GM12878 (cell line): ENCODE measurements at regions of chr10 and their contacts with region 1.

Region 1: DNA sequence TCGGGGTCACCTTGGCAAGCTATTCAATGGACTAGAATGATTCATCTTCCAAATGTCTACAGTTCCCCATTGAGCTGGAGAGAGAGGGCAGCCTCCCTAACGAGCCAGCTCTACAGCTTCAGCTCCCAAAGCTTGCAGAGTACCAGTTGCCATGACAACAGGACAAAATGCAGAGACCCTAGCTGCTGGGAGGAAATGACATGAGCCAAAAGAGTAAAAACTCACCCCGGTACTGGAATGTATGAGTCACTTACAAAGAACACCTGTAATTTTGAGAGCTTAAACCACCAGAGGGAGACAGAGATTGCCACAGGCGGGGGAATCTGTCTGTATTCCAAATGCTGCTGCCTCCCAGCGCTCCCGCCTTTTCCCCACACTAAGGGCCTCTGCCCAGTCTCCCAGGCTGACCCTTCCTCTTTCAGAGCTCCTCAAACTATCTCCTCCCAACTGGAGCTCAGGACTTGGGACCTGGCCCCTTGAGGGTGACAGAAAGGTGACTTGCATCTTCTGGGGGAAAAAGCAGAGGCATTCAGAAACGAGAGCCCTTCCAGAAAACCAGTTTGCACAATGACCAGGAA is 95.5 kb downstream of the CUL2 start:
- DNase-seq: peak; percentile 38
- ATAC-seq: peak; percentile 92
- H3K4me3 ChIP-seq: no peak overlapping the region
- H3K27ac ChIP-seq: no peak overlapping the region
- H3K4me1 ChIP-seq: peaks cover 4% of the 10 kb centered on the region; the same call in 1 of the 2 replicates
- H3K27me3 ChIP-seq: no peaks in the 10 kb centered on the region
- CTCF ChIP-seq: peak; percentile 62 to 72 (median 69)
- EP300 ChIP-seq: peak in 1 of 2 experiments; percentile 44; a peak in 1 of 4 replicates
- POLR2A ChIP-seq: no peak
- RAD21 ChIP-seq: peak; percentile 66

Region 2: DNA sequence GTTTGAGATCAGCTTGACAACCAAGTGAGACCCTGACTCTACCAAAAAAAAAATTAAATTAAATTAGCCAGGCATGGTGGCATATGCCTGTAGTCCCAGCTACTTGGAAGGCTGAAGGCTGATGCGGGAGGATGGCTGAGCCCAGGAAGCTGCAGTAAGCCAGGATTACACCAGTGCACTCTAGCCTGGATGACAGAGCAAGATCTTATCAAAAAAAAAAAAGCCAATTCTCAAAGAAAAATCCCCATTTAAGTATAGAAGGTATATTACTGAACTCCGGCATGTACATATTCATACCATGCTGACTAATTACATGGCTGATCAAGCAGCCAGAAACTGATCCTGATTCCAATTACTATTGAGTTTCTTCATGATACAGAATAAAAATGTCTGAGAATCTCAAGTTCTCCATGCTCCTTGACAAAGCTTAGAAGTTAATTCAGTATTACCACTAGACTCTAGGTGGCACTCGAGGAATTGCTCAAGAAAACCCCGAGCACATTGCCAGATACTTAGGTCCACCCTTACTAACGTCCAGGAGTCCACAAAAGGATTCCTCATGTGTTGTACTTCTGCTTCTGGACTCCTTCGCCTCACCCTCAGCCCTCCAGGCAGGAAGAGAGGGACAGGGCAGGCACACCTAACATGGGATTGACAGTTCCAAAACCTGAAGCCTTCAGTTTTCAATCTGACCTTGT is 328.5 kb before region 1 on chr10:
- CTCF ChIA-PET with region 1: interaction called, 28 read pairs
- POLR2A ChIA-PET with region 1: no interaction called
- RAD21 ChIA-PET with region 1: interaction called, 22 read pairs
- SMC1A ChIA-PET with region 1: interaction called, 21 read pairs
- in situ Hi-C with region 1: no loop called
- intact Hi-C with region 1: no loop called
- DNase-seq: peak; percentile 53
- ATAC-seq: peak; percentile 91
- H3K4me3 ChIP-seq: no peak overlapping the region
- H3K27ac ChIP-seq: no peak overlapping the region
- H3K4me1 ChIP-seq: no peaks in the 10 kb centered on the region; the same call in 1 of the 2 replicates
- H3K27me3 ChIP-seq: no peaks in the 10 kb centered on the region
- CTCF ChIP-seq: peak; percentile 55 to 72 (median 61); a peak in 5 of 6 replicates
- EP300 ChIP-seq: no peak
- POLR2A ChIP-seq: no peak
- RAD21 ChIP-seq: peak; percentile 72

Region 3: GRCh38 chr10:35015843-35016408 is 21.3 kb after region 1 on chr10:
- CTCF ChIA-PET with region 1: interaction called, 13 read pairs
- POLR2A ChIA-PET with region 1: interaction called, 3 read pairs
- RAD21 ChIA-PET with region 1: no interaction called
- SMC1A ChIA-PET with region 1: interaction called, 4 read pairs
- in situ Hi-C with region 1: no loop called
- intact Hi-C with region 1: no loop called
- DNase-seq: no peak
- ATAC-seq: no peak
- H3K4me3 ChIP-seq: no peak overlapping the region
- H3K27ac ChIP-seq: no peak overlapping the region
- H3K4me1 ChIP-seq: no peaks in the 10 kb centered on the region
- H3K27me3 ChIP-seq: no peaks in the 10 kb centered on the region
- CTCF ChIP-seq: no peak
- EP300 ChIP-seq: no peak
- POLR2A ChIP-seq: no peak
- RAD21 ChIP-seq: no peak

Region 4: GRCh38 chr10:35063837-35064454 is 69.3 kb after region 1 on chr10:
- CTCF ChIA-PET with region 1: no interaction called
- POLR2A ChIA-PET with region 1: no interaction called
- RAD21 ChIA-PET with region 1: no interaction called
- SMC1A ChIA-PET with region 1: no interaction called
- in situ Hi-C with region 1: no loop called
- intact Hi-C with region 1: no loop called
- DNase-seq: no peak
- ATAC-seq: no peak
- H3K4me3 ChIP-seq: no peak overlapping the region
- H3K27ac ChIP-seq: no peak overlapping the region
- H3K4me1 ChIP-seq: no peaks in the 10 kb centered on the region
- H3K27me3 ChIP-seq: no peaks in the 10 kb centered on the region
- CTCF ChIP-seq: no peak
- EP300 ChIP-seq: no peak
- POLR2A ChIP-seq: no peak
- RAD21 ChIP-seq: no peak

Region 5: GRCh38 chr10:35119378-35119777 is 124.7 kb after region 1 on chr10:
- CTCF ChIA-PET with region 1: interaction called, 6 read pairs
- POLR2A ChIA-PET with region 1: no interaction called
- RAD21 ChIA-PET with region 1: interaction called, 28 read pairs
- SMC1A ChIA-PET with region 1: interaction called, 6 read pairs
- in situ Hi-C with region 1: no loop called
- intact Hi-C with region 1: no loop called
- DNase-seq: no peak
- ATAC-seq: no peak
- H3K4me3 ChIP-seq: no peak overlapping the region
- H3K27ac ChIP-seq: no peak overlapping the region
- H3K4me1 ChIP-seq: no peaks in the 10 kb centered on the region
- H3K27me3 ChIP-seq: no peaks in the 10 kb centered on the region
- CTCF ChIP-seq: no peak
- EP300 ChIP-seq: no peak
- POLR2A ChIP-seq: no peak
- RAD21 ChIP-seq: no peak

Region 6: GRCh38 chr10:35218339-35218955 is 223.8 kb after region 1 on chr10:
- CTCF ChIA-PET with region 1: interaction called, 60 read pairs
- POLR2A ChIA-PET with region 1: no interaction called
- RAD21 ChIA-PET with region 1: interaction called, 14 read pairs
- SMC1A ChIA-PET with region 1: interaction called, 16 read pairs
- in situ Hi-C with region 1: no loop called
- intact Hi-C with region 1: no loop called
- DNase-seq: peak; percentile 59
- ATAC-seq: peak; percentile 85
- H3K4me3 ChIP-seq: no peak overlapping the region
- H3K27ac ChIP-seq: no peak overlapping the region
- H3K4me1 ChIP-seq: peaks cover 12% of the 10 kb centered on the region
- H3K27me3 ChIP-seq: no peaks in the 10 kb centered on the region
- CTCF ChIP-seq: peak; percentile 64 to 86 (median 79); a peak in 5 of 6 replicates
- EP300 ChIP-seq: no peak
- POLR2A ChIP-seq: no peak
- RAD21 ChIP-seq: peak; percentile 90

Region 7: GRCh38 chr10:35563261-35563891 is 568.7 kb after region 1 on chr10:
- CTCF ChIA-PET with region 1: interaction called, 12 read pairs
- POLR2A ChIA-PET with region 1: no interaction called
- RAD21 ChIA-PET with region 1: interaction called, 3 read pairs
- SMC1A ChIA-PET with region 1: no interaction called
- in situ Hi-C with region 1: no loop called
- intact Hi-C with region 1: no loop called
- DNase-seq: peak; percentile 15
- ATAC-seq: peak; percentile 84
- H3K4me3 ChIP-seq: no peak overlapping the region
- H3K27ac ChIP-seq: no peak overlapping the region
- H3K4me1 ChIP-seq: peaks cover 8% of the 10 kb centered on the region
- H3K27me3 ChIP-seq: no peaks in the 10 kb centered on the region
- CTCF ChIP-seq: peak; percentile 90 to 100 (median 100)
- EP300 ChIP-seq: no peak
- POLR2A ChIP-seq: no peak
- RAD21 ChIP-seq: peak; percentile 71